Cardiac septum (tissue), 1 donor: ENCODE measurements at regions of chr2 and their contacts with region 1.

Region 1: GRCh38 chr2:168118733-168119514 is 128.5 kb downstream of the STK39 start:
- DNase-seq: no peak

Region 2: DNA sequence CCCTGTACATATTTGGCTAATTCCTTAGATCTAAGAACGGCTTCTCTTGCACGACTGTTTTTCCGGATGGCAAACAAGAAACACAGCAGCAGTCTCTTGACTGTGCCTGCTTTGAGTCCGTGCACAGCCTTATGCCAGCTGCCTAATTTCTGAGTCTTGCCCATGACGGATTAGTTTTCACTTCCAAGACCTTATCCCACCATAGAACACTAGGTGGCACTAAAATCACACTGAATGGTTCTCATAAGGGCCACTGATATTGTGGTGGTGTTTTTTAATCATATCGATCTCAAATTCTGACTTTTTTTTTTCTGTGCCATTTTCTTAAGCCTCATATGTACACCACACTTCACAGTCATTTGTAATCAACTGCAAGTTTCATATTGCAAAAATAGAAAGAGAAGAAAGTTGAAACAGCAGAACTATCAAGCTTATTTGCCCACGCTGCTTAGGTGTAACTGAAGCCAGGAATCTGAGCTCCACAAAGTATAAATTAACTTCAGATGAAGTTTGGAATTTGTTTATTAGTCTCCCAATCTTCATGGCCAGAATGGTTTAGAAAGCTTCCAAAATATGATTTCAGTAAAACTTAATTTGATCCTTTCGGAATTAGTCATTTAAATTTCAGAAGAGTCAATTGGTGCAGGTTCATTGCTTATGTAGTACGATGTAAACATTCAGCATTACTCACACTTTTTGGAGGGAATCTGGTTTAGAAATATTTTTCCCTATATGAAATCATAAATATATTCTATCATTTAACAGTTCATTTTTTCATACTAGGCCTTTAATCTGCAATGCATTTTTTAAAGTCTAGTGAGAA is 1579.4 kb before region 1 on chr2:
- intact Hi-C with region 1: loop called (anchors 5 kb)
- DNase-seq: no peak

Region 3: GRCh38 chr2:167964650-167965413 is 154.1 kb before region 1 on chr2:
- intact Hi-C with region 1: loop called (anchors 2 kb)
- DNase-seq: no peak

Region 4: GRCh38 chr2:168015274-168015953 is 103.5 kb before region 1 on chr2:
- intact Hi-C with region 1: no loop called
- DNase-seq: no peak